ENCODE measurements at regions of chr2 and their contacts with region 1.

Region 1: DNA sequence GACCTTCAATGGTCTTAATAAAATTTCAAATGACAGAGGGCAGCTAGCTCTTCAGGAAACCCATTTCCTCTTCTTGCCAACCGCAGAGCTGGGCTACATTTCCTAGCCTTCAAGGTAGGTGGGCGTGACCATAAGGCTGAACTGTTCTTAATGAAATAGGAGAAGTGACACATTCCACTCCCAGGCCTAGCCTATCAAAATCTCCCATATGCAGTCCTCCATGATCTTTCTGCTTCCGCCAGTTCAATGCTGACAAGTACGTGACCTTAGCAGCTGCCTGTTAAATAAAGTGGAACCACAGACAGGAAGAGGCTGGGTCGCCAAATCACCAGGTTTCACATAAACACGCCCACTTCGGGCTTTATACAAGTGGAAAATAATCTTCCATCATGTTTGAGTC is 13.2 kb downstream of the SERPINE2 start:
- DNase-seq: peak; percentile 84
- H3K4me3 Mint-ChIP-seq: peak overlapping the region; percentile 64
- H3K27ac Mint-ChIP-seq: peak overlapping the region; percentile 95
- H3K4me1 Mint-ChIP-seq: peaks cover 84% of the 10 kb centered on the region
- H3K27me3 Mint-ChIP-seq: no peaks in the 10 kb centered on the region

Region 2: DNA sequence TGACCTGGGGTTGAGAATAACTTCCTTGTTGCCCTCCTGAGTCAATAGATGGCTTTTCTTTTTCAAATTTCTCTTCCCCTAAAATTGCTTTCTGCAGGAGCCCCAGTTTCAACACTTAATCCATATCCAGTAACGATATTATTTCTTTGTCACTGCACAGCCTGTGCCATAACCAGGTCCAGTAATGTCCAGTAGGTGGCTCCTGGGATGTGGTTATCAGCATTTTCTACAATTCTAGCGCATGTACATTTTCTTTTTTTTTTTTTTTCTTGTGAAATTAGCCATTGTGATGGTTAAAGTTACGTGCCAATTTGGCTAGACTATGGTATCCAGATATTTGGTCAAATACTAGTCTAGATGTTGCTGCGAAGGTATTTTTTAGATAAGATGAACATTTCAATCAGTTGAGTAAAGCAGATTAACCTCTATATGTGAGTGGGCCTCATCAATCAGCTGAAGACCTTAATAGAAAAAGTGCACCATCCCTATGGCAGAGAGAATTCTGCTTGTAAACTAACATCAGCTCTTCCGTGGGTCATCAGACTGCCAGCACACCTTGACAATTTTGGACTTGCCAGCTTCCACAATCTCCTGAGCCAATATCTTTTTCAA is 350.8 kb before region 1 on chr2:
- CTCF ChIA-PET with region 1: no interaction called
- intact Hi-C with region 1: no loop called
- DNase-seq: peak; percentile 8
- H3K4me3 Mint-ChIP-seq: no peak overlapping the region
- H3K27ac Mint-ChIP-seq: no peak overlapping the region
- H3K4me1 Mint-ChIP-seq: no peaks in the 10 kb centered on the region
- H3K27me3 Mint-ChIP-seq: no peaks in the 10 kb centered on the region

Region 3: DNA sequence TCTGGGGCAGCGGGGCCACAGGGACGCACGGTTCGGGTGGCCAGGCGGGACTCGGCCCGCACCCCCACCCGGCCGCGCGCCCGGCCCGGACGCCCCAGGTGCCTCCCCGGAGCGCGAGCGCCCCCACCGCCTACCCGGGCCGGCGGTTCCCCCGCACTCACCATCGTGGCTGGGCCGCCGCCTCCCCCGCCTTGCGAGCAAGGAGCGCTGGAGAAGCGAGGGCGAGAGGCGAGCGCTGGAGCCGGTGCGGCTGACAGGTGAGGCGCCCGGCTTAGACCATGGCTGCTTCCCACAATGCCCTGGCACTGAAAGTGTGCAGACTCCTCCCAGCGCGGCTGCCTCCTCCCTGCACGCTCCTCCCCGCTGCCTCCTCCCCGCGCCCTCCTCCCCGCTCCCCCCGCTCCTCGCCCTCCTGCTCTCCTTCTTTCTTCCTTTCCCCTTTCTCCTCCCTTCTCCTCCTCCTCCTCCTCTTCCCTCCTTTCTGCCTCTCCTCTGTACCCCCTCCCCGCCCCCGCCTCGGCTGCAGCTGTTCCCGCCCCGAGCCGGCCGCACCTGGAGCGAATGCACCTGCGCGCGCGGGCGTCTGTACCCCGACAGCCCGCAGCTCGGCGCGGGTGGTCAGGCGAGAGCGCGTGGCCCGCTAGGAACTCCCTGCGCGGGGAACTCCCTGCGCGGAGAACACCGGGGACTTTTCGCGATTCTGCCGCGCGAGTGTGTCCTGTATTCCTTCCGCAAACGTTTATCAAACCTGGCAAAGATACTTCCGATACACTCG is 188.4 kb before region 1 on chr2 and contains the start of gene AP1S3:
- CTCF ChIA-PET with region 1: no interaction called
- intact Hi-C with region 1: loop called (anchors 5 kb)
- DNase-seq: peak; percentile 83
- H3K4me3 Mint-ChIP-seq: peak within 1 kb of the TSS; percentile 97
- H3K27ac Mint-ChIP-seq: peak within 1 kb of the TSS; percentile 53
- H3K4me1 Mint-ChIP-seq: peaks cover 13% of the 10 kb centered on the region
- H3K27me3 Mint-ChIP-seq: peaks cover 2% of the 10 kb centered on the region
- total RNA-seq, gene AP1S3: 10.7 to 12.8 TPM